ENCODE measurements at regions of chr10 and their contacts with region 1.

Region 1: DNA sequence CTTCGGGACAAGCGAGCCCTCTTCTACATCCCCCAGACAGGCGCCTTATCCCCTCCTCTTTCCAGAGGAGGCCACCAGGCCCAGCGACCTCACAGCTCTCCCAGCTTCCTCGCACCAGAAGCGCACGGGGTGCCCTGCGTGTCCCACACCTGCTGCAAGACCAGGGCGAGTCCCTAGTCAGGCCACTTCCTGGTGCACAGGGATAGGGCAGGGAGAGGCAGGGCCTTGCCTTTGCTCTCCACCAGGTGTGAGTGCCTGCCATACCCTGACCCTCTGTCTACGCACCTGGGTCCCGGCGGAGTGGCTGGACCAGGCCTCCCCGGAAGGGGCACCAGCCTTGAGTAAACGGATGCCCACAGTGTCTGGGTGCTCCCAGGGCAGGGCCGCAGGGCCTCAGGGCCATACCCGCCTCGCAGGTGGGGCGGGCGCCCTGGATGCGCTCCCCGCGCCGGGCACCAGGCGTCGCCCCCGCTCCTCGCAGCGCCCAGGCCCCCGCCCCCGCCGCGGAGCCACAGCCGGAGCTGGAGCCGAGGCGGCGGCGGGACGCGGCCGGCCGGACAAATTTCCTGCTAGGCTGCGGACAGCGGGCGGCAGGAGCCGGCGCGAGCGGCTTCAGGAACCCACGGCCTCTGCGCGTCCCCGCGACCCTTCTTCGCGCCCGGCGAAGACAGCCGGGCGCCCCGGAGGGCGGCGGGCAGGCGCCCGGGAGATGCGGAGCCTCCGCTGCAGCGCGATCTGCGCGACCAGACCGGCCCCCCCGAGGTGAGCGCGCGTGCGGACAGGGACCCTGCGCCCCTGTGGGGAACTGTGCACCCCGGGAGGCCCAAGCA is at the start of gene PTPRE:
- DNase-seq: peak; percentile 78
- H3K4me3 ChIP-seq: peak within 1 kb of the TSS; percentile 69
- H3K27ac ChIP-seq: no peak within 1 kb of the TSS
- H3K4me1 ChIP-seq: no peaks in the 10 kb centered on the region
- H3K27me3 ChIP-seq: peaks cover 7% of the 10 kb centered on the region
- CTCF ChIP-seq: peak; percentile 62
- total RNA-seq, gene PTPRE: 4.6 and 11.6 TPM in 2 replicates

Region 2: DNA sequence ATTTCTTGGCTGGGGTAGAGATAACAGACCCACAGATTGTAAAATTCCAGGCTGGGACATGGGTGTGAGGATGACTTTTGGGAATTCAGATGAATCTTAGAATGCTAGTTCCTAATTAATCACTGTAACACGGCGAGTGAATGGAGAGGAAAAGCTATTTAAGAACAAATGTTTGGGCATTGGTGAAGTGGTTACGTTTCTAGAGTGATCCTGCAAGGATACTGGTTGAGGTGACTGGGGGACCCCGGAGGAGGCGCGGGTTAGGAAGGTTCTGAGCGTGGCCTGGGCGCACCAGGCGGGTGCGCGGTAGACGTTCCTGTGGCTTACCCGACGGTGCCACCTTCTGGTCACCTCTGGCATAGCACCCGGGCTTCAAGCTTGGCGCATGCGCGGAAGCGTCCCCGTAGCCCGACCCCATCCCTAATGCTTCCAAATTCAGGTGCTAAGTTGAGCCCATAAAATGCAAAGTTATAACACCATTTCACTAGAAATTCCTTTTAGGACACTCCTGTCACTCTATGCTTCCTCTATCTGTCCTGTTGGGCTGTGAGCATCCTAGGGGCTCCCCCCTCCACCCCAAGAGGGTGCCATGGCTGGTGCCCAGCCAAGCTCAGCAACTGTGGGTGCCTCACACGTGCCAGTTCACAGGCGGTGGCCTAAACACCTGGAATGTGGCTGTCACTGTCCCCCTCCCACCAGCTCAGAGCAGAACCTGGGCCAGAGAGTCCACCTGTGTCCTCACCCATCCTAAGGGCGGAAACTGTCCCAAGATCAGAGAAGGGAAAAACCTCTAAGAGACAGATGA is 104.6 kb after region 1 on chr10:
- CTCF ChIA-PET with region 1: interaction called, 65 read pairs
- POLR2A ChIA-PET with region 1: interaction called, 3 read pairs
- intact Hi-C with region 1: loop called (anchors 1 kb)
- DNase-seq: peak; percentile 84
- H3K4me3 ChIP-seq: no peak overlapping the region
- H3K27ac ChIP-seq: no peak overlapping the region
- H3K4me1 ChIP-seq: no peaks in the 10 kb centered on the region
- H3K27me3 ChIP-seq: no peaks in the 10 kb centered on the region
- CTCF ChIP-seq: peak; percentile 98